Activated CD4-positive, alpha-beta T cell treated with anti-CD3 and anti-CD28 coated beads, Interleukin-2, amount 10 ng/mL, durations not matched to agents 7 days and 5 days (primary cell): ENCODE measurements at regions of chr10 and their contacts with region 1.

Region 1: GRCh38 chr10:80202934-80203834 is 2.2 kb downstream of the ANXA11 start:
- DNase-seq: peak; percentile 80
- H3K4me3 Mint-ChIP-seq: peak overlapping the region; percentile 98
- H3K27ac Mint-ChIP-seq: peak overlapping the region; percentile 88
- H3K4me1 Mint-ChIP-seq: peaks cover 58% of the 10 kb centered on the region
- H3K27me3 Mint-ChIP-seq: no peaks in the 10 kb centered on the region

Region 2: DNA sequence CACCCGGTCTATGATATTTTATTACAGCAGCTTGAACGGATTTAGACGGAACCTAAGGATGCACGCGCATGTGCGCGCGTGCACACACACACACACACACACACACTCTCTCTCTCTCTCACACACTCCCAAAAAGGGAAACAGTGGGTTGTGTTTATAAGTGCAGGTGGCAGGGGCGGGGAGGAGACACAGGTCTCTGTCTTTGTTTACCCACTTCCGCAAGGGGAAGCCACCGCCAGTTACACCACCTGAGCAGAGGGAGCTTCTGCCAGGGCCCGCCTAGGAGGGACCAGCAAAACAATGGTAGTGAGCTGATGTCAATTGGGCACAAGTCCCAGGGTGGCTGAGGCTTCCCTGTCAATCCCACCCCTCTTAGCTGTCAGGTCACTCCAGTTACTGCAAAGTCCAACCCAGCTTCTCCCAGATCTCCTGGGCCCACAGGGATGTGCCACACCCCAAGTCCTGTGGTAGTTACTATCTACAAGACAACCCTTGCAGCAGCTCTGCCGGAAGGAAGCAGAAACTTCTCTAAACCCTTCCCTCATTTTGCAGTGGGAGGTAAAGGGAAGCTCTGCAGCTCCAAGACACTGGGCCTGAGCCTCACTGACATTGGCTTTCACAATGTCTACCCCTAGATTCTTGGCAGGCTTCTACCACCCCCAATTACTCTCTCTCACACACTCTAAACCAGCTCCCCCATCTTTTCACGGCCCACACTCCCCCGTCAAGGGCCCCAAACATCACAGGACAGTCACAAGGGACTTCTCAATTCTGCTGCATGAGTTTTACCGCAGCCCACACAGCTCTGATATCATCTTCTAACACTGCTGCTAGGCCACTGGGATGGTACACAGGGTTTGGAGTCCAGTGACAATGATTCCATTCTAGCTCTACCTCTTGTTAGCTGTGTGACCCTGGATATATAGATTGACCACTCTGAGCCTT is 15.4 kb before region 1 on chr10:
- CTCF ChIA-PET with region 1: interaction called, 12 read pairs
- POLR2A ChIA-PET with region 1: interaction called, 6 read pairs
- DNase-seq: peak; percentile 93
- H3K4me3 Mint-ChIP-seq: peak overlapping the region; percentile 63
- H3K27ac Mint-ChIP-seq: peak overlapping the region; percentile 91
- H3K4me1 Mint-ChIP-seq: peaks cover 74% of the 10 kb centered on the region
- H3K27me3 Mint-ChIP-seq: no peaks in the 10 kb centered on the region